Posterior vena cava (tissue), 2 donors: ENCODE measurements at regions of chr7 and their contacts with region 1.

Region 1: GRCh38 chr7:24819916-24820689 is 62.8 kb upstream of the GSDME start:
- DNase-seq: peak; percentile 90

Region 2: DNA sequence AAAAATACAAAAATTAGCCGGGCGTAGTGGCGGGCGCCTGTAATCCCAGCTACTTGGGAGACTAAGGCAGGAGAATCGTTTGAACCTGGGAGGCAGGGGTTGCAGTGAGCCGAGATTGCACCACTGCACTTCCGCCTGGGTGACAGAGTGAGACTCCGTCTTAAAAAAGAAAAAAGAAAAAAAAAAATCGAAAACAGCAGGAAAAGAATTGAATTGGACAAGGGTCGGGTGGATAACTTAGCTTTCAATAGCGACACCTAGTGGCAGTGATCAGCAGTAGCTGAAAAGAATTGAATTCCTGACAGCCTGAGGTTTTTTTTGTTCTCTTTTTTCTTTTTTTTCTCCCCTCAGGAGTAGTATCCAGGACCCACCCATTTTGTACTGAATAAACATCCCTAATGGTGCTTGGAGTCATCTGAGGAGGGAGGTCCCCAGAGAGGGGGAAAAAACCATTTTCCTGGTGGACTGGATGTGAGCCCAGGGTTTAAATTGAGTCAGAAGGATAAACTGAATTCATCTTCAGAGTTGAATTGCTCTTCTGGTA is 249.9 kb after region 1 on chr7:
- intact Hi-C with region 1: loop called in 1 of 2 experiments (anchors 5 kb)
- DNase-seq: no peak

Region 3: GRCh38 chr7:25087855-25088254 is 267.8 kb after region 1 on chr7:
- intact Hi-C with region 1: loop called in 1 of 2 experiments (anchors 10 kb)
- DNase-seq: no peak

Region 4: GRCh38 chr7:25098096-25099046 is 278.3 kb after region 1 on chr7:
- intact Hi-C with region 1: loop called in 1 of 2 experiments (anchors 5 kb)
- DNase-seq: no peak